Ascending aorta (tissue), 2 donors: ENCODE measurements at regions of chr13 and their contacts with region 1.

Region 1: DNA sequence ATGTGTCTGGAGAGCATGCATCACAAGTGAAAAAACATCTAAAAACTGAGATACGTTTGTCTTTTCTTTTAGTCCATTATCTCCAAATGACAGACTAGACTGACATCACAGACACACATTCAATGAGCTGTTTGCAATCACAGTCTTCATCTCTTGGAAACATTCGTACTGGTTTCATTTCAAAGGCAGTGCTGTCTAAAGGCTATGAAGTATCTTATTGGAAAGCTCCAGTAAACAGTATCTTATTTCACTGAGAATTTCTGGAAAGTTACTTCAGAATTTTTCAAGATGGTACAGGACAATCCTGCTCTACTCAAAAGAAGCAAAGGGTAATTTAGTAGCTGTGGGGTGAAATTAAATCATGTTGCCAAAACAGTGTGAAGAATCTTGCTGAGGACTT is 53.5 kb upstream of the TNFRSF19 start:
- DNase-seq: no peak
- H3K4me3 ChIP-seq: no peak overlapping the region
- H3K27ac ChIP-seq: no peak overlapping the region
- H3K4me1 ChIP-seq: no peaks in the 10 kb centered on the region
- H3K27me3 ChIP-seq: no peaks in the 10 kb centered on the region
- CTCF ChIP-seq: no peak

Region 2: GRCh38 chr13:23391752-23392151 is 125.0 kb before region 1 on chr13:
- intact Hi-C with region 1: no loop called
- DNase-seq: no peak
- H3K4me3 ChIP-seq: no peak overlapping the region
- H3K27ac ChIP-seq: no peak overlapping the region
- H3K4me1 ChIP-seq: peaks cover 0 to 4% of the 10 kb centered on the region in 2 donors
- H3K27me3 ChIP-seq: no peaks in the 10 kb centered on the region
- CTCF ChIP-seq: no peak

Region 3: GRCh38 chr13:23618341-23618740 is 101.6 kb after region 1 on chr13:
- intact Hi-C with region 1: loop called (anchors 10 kb)
- DNase-seq: no peak
- H3K4me3 ChIP-seq: no peak overlapping the region
- H3K27ac ChIP-seq: no peak overlapping the region
- H3K4me1 ChIP-seq: no peaks in the 10 kb centered on the region
- H3K27me3 ChIP-seq: no peaks in the 10 kb centered on the region
- CTCF ChIP-seq: no peak